OCI-LY7 (cell line): ENCODE measurements at regions of chr1 and their contacts with region 1.

Region 1: GRCh38 chr1:107362468-107363140 is 221.8 kb downstream of the NTNG1 start:
- DNase-seq: peak; percentile 31
- H3K4me3 ChIP-seq: peak overlapping the region; percentile 5
- H3K27ac ChIP-seq: peak overlapping the region; percentile 34
- H3K4me1 ChIP-seq: peaks cover 57% of the 10 kb centered on the region
- CTCF ChIP-seq: no peak

Region 2: GRCh38 chr1:107056426-107057196 is 306.0 kb before region 1 on chr1 and contains the start of gene PRMT6:
- CTCF ChIA-PET with region 1: no interaction called
- POLR2A ChIA-PET with region 1: no interaction called
- intact Hi-C with region 1: loop called (anchors 5 kb)
- DNase-seq: peak; percentile 89
- H3K4me3 ChIP-seq: peak within 1 kb of the TSS; percentile 83
- H3K27ac ChIP-seq: peak within 1 kb of the TSS; percentile 54
- H3K4me1 ChIP-seq: peaks cover 21% of the 10 kb centered on the region
- CTCF ChIP-seq: peak; percentile 37; the same call in 1 of the 2 replicates
- total RNA-seq, gene PRMT6: 41.7 and 42.5 TPM in 2 replicates

Region 3: GRCh38 chr1:107171333-107171732 is 191.3 kb before region 1 on chr1:
- CTCF ChIA-PET with region 1: no interaction called
- POLR2A ChIA-PET with region 1: no interaction called
- intact Hi-C with region 1: no loop called
- DNase-seq: no peak
- H3K4me3 ChIP-seq: no peak overlapping the region
- H3K27ac ChIP-seq: no peak overlapping the region
- H3K4me1 ChIP-seq: no peaks in the 10 kb centered on the region
- CTCF ChIP-seq: no peak

Region 4: GRCh38 chr1:107246775-107247345 is 115.7 kb before region 1 on chr1:
- CTCF ChIA-PET with region 1: no interaction called
- POLR2A ChIA-PET with region 1: interaction called, 17 read pairs
- intact Hi-C with region 1: loop called (anchors 2 kb)
- DNase-seq: peak; percentile 37
- H3K4me3 ChIP-seq: peak overlapping the region; percentile 9
- H3K27ac ChIP-seq: peak overlapping the region; percentile 61
- H3K4me1 ChIP-seq: peaks cover 61% of the 10 kb centered on the region
- CTCF ChIP-seq: no peak

Region 5: DNA sequence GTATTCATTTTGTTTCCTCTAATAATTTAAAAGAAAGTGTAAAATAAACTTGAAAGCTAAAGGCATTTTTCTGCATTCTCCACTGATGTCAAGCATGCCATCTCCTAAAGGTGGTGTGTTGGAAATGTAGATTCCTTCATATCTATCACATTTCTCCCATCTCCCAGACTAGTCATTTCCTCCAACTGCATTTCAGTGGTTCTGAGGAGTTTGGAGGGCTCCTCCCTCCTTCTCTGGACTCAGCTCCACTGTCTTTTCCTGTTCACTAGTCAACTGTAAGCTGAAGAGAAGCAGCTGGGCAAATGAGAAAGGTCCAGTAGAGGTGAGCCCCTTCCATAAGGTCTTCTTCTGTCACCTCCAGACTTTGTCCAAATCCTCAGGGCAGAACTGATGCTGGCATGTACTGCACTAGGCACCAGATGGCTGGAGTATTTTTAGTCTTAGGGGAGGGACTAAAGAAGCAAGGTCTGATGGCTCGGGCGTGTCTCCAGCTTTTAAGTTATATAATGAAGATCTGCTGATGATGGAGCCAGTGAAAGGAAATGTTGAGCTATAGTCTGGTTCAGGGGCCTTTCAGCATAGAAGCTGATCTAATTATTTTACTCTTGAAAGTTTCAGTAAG is 35.7 kb before region 1 on chr1:
- CTCF ChIA-PET with region 1: no interaction called
- POLR2A ChIA-PET with region 1: interaction called, 14 read pairs
- intact Hi-C with region 1: loop called (anchors 5 kb)
- DNase-seq: peak; percentile 60
- H3K4me3 ChIP-seq: no peak overlapping the region
- H3K27ac ChIP-seq: no peak overlapping the region
- H3K4me1 ChIP-seq: peaks cover 20% of the 10 kb centered on the region
- CTCF ChIP-seq: no peak

Region 6: DNA sequence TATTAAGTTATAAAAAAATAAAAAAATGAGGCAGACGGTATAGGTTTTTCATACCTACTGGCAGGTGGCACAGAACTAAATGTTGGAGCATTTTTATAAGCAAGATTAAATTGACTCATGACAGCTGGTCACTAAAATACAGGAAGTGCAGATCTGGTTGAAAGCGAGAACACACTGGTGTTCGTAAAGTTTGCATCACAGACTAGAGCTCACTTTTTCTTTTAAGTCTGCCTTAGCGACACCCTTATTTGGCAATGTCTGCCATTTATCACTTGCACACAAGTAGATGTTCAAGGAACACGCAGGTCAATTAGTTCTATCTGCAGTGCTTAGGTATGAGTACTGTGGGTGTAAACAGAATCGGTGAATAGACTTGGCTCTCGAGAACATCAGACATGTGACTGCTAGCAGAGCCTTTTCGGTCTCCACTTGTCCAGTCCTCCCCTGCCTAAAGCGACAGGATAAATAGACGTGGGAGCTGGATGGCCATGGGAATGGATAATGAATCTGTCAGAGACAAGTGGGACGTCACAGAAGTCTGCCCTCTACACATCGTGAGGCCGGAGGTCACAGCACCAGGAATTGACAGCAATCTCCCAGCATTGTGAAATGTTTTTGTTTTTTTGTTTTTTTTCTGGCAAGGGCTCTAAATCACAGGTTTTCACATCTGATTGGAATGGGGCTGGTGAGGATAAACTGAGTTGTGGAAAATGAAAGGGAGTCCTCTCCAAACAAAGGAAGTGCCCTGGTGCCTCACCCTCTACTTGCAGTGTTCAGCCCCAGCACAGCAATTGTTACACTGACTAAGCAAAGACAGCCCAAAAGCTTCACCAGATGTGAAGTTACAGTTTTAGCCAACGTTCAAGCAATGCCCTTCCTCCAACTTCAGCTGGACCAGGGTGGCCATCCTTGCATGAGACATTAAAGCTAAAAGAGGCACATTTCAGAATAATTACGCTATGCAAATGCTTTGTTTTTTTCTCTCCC is 27.1 kb after region 1 on chr1:
- CTCF ChIA-PET with region 1: no interaction called
- POLR2A ChIA-PET with region 1: interaction called, 10 read pairs
- intact Hi-C with region 1: no loop called
- DNase-seq: peak; percentile 35
- H3K4me3 ChIP-seq: no peak overlapping the region
- H3K27ac ChIP-seq: no peak overlapping the region
- H3K4me1 ChIP-seq: peaks cover 19% of the 10 kb centered on the region
- CTCF ChIP-seq: no peak

Region 7: DNA sequence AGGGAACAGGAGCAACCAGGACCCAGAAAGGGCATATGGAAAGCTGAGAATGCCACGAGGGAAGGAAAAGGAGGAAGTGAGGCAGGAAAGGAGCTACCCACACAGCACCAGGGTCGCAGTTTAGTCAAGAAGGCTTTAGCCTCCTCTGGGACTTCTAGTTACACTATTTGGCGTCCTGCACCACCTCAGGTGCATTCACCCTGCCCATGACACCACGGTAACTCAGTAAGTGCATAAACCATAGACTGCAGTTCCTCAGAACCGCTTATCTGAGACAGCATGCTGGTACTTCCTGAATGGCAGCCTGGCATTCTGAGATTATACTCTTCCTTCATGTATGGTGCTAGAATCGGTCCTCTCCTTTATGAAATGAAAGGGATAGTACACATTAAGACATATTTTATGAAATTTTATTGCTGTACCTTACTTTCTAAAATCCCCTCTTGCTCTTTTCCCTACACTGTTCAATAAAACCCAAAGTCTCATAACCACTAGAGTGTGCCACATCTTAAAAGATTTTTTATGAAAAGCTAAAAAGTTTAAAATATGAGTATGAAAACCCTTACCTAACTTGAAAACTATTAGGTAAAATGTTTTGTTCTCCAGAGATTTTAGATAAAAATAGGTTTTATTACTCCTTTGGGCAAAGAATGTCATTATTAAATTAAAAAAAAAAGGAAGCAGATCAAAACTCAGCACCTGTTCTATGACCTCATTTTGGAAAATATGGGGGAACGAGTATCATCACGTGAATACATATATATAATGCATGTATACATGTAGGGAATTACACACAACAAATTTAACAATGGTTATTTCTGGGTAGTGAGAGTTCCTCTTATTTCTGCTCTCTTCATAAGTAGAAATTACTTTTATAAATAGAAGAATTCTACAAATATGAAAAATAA is 535.1 kb after region 1 on chr1:
- CTCF ChIA-PET with region 1: no interaction called
- POLR2A ChIA-PET with region 1: no interaction called
- intact Hi-C with region 1: no loop called
- DNase-seq: peak; percentile 84
- H3K4me3 ChIP-seq: peak overlapping the region; percentile 39
- H3K27ac ChIP-seq: peak overlapping the region; percentile 89
- H3K4me1 ChIP-seq: peaks cover 74% of the 10 kb centered on the region
- CTCF ChIP-seq: peak; percentile 71